Naive thymus-derived CD4-positive, alpha-beta T cell (primary cell): ENCODE measurements at regions of chr18 and their contacts with region 1.

Region 1: DNA sequence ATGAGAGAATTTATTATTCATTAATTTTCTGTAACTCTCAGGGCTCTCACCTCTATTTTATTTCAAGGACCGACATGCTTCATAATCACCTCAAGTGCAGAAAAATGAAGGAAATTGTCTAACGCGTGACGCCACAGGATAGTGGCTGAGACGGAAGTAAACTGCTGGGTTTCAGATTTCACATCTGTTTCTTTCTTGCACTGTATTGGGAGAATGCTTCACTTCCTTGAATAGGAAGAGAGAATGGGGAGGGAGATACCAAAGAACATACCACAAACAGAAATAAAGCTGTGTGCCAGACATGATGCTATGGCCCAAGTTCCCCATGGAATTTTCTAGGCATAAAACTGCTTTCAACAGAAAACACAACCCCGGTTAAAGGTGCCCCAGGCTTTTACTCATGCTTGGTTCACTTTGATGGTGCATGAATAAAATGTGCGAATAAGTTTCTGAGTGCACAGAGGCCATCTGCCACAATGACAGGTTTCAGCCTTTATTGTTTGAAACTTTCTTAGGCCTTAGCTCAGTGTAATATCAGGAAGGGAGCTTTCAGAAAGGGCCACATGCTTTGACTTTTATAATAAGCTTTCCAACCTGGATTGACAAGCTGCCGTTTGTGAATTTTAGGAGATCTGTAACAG is 1116.4 kb downstream of the SOCS6 start:
- DNase-seq: no peak
- ATAC-seq: no peak
- H3K4me3 ChIP-seq: no peak overlapping the region
- H3K4me3 Mint-ChIP-seq: no peak overlapping the region
- H3K27ac ChIP-seq: no peak overlapping the region
- H3K27ac Mint-ChIP-seq: no peak overlapping the region
- H3K4me1 ChIP-seq: no peaks in the 10 kb centered on the region
- H3K4me1 Mint-ChIP-seq: no peaks in the 10 kb centered on the region
- H3K27me3 ChIP-seq: no peaks in the 10 kb centered on the region
- H3K27me3 Mint-ChIP-seq: no peaks in the 10 kb centered on the region

Region 2: DNA sequence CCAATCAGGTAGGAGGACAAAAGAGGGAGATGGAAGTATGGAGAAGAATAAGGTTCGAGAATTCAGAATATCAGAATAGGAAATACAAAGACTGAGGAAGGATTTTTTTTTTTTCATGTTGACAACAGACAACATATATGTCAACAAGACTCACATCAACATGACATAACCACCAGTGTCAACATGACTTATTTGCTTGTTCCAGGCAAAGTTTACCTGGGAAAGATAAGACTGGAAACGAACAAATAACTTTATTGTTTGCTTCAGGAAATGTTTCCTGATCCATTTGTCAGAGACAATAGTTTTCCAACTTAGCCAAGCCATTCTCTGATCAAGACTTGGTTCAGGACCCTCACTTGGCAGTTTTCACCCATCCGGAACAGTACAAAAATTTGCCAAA is 1784.4 kb after region 1 on chr18:
- CTCF ChIA-PET with region 1: no interaction called
- POLR2A ChIA-PET with region 1: no interaction called
- intact Hi-C with region 1: loop called in 1 of 2 experiments (anchors 10 kb)
- DNase-seq: no peak
- ATAC-seq: no peak
- H3K4me3 ChIP-seq: no peak overlapping the region
- H3K4me3 Mint-ChIP-seq: no peak overlapping the region
- H3K27ac ChIP-seq: no peak overlapping the region
- H3K27ac Mint-ChIP-seq: no peak overlapping the region
- H3K4me1 ChIP-seq: no peaks in the 10 kb centered on the region
- H3K4me1 Mint-ChIP-seq: no peaks in the 10 kb centered on the region
- H3K27me3 ChIP-seq: no peaks in the 10 kb centered on the region
- H3K27me3 Mint-ChIP-seq: no peaks in the 10 kb centered on the region